ENCODE measurements at regions of chr5 and their contacts with region 1.

Region 1: DNA sequence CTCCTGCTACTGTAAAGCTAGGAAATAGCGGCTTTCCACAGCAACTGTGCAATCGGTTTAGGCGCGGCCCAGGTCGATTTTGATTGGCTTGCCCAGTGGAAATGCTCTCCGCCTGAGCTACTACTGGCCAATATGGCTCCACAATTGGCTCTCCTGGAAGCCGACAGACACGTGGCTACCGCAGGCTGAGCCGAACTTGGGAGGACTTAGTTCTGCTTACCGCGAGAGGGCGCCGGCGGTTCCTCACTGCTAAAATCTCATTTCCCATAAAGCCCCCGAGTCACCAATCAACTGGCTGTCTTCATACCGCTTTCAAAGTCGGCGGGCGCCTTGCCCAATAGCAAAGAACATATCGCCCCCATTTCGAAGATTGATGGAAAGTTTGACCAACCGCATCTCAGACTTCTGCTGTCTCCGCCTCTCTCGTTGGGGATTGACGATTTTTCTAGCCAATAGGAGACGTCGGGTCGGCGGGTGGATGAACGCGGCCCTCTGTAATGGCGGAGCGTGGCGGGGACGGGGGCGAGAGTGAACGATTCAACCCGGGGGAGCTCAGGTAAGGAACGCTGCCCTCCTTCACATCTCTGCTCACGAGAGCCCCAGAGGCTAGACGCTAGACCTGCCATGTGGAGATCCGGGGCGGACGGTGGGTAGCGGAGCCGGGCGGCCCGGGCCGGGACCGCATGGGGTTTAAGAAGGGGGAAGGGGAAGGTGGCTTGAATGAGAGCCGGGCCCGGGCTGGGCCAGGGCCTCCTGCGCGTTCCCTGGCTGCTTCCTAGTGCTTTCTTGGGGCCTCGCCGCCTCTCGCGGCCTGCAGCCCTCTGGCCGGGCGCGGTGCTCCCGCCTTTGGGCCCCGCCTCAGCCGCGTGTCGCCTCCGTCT is at the start of gene TCERG1:
- DNase-seq: peak; percentile 100
- ATAC-seq: peak; percentile 89
- H3K4me3 ChIP-seq: peak within 1 kb of the TSS; percentile 41 to 99 (median 93)
- H3K4me3 Mint-ChIP-seq: peak within 1 kb of the TSS; percentile 99
- H3K27ac ChIP-seq: peak within 1 kb of the TSS; percentile 95 to 97
- H3K27ac Mint-ChIP-seq: peak within 1 kb of the TSS; percentile 99
- H3K4me1 ChIP-seq: peaks cover 21 to 23% of the 10 kb centered on the region in 2 donors
- H3K4me1 Mint-ChIP-seq: peaks cover 42% of the 10 kb centered on the region
- H3K27me3 ChIP-seq: no peaks in the 10 kb centered on the region
- H3K27me3 Mint-ChIP-seq: no peaks in the 10 kb centered on the region
- CTCF ChIP-seq: peak; percentile 84
- total RNA-seq, gene TCERG1: 95.2 and 101 TPM in 2 replicates

Region 2: DNA sequence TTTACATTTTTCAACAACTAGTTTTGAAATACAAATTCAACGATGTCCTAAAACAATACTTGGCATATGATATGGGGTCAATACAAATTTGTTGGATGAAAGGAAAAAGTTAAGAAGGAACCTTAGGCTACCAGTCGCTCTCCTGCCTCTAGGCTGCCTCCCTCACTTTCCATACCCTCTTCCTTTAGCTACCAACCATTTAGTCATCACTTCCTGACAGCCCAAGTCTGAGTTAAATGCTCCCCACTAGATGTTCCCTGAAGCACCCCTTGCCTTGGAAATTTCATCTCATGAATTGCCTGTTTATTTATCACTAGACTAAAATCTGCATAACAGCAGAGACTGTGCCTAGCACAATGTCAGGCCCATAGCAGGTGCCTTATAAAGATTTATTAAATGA is 261.9 kb before region 1 on chr5:
- CTCF ChIA-PET with region 1: no interaction called
- POLR2A ChIA-PET with region 1: interaction called, 5 read pairs
- intact Hi-C with region 1: loop called (anchors 1 kb)
- DNase-seq: no peak
- ATAC-seq: no peak
- H3K4me3 ChIP-seq: no peak overlapping the region
- H3K4me3 Mint-ChIP-seq: peak overlapping the region; percentile 32
- H3K27ac ChIP-seq: no peak overlapping the region
- H3K27ac Mint-ChIP-seq: no peak overlapping the region
- H3K4me1 ChIP-seq: peaks cover 5 to 17% of the 10 kb centered on the region in 2 donors
- H3K4me1 Mint-ChIP-seq: peaks cover 12% of the 10 kb centered on the region
- H3K27me3 ChIP-seq: no peaks in the 10 kb centered on the region
- H3K27me3 Mint-ChIP-seq: peaks cover 8% of the 10 kb centered on the region
- CTCF ChIP-seq: no peak

Measured in B cell (primary cell).